GM10248 (cell line): ENCODE measurements at regions of chr1 and their contacts with region 1.

Region 1: DNA sequence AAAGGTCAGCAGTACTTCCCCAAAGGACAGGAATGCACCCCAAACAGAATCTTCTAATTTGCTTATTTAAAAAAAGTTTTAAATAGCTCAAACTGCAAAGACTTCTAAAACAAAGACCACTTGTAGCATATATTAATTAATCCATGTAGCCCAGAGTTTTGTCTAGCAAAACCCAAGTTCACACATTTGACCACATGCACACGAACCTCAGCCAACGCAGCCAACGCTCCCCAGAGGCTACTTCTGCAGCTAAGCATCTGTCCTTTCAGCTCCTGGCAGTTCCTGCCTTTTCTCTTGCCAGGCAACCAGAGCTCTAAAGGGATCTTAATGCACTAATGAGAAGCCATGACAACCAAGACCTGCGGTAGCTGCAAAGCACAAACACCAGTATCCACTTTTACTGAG is 89.6 kb downstream of the RERE start:
- DNase-seq: peak; percentile 31
- CTCF ChIP-seq: no peak

Region 2: GRCh38 chr1:8463144-8463927 is 264.5 kb before region 1 on chr1:
- CTCF ChIA-PET with region 1: no interaction called
- POLR2A ChIA-PET with region 1: no interaction called
- DNase-seq: no peak
- CTCF ChIP-seq: no peak

Region 3: DNA sequence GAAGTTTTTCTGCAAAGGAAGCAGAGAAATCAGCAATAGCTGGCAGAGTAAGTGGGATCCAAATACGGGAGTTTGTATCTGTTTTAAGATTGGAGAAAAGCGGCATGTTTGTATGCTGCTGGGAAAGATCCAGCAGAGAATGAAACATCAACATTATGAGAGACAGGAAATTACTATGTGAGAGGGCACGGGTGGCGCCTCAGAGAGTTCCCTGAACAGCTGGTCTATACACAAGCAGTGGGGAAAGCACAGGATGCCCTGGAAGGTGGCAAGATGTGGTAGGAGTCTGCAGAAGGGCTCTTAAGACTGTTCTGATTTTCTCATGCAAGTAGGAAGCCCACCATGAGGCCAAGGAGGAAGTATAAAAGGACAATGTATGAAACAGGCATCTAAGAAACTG is 40.8 kb before region 1 on chr1:
- CTCF ChIA-PET with region 1: interaction called, 11 read pairs
- POLR2A ChIA-PET with region 1: no interaction called
- DNase-seq: no peak
- CTCF ChIP-seq: no peak

Region 4: DNA sequence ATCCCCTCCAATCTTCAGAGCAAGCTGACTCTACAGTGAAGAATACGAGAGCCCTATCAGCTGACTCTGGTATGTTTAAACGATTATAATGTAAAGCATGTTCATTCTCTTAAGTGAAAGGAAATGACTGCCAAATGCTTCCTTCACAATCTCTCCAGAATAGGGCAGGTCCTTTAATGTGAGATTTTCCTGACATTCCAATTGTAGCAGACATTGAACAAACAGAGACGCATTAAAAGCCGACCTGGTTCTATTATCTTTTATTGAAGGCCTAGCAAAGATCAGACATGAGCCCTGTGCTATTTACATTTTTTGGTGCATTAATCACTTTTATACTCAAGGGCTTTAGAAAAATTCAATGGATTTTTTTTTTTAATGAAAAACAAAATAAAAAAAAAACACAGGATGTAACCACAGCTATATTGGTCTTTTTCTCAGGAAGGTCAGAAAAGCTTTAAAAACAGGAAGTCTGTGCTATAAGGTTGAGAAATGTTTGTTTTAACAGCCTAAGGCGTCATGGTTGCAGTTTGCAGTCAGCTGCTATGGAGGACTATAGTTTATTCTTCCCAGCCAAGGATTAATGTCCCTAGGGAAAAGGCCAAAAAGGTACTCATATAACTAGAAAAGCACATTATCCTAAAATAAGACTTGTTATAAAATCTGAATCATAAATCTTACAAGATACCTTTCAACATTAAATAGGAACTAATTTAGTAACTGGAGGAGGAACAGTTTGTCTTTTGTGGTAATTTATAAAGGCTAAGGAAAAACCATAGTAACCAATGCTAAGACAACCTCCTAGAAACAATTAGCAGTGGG is 15.2 kb before region 1 on chr1:
- CTCF ChIA-PET with region 1: interaction called, 31 read pairs
- POLR2A ChIA-PET with region 1: interaction called, 4 read pairs
- DNase-seq: no peak
- CTCF ChIP-seq: no peak

Region 5: DNA sequence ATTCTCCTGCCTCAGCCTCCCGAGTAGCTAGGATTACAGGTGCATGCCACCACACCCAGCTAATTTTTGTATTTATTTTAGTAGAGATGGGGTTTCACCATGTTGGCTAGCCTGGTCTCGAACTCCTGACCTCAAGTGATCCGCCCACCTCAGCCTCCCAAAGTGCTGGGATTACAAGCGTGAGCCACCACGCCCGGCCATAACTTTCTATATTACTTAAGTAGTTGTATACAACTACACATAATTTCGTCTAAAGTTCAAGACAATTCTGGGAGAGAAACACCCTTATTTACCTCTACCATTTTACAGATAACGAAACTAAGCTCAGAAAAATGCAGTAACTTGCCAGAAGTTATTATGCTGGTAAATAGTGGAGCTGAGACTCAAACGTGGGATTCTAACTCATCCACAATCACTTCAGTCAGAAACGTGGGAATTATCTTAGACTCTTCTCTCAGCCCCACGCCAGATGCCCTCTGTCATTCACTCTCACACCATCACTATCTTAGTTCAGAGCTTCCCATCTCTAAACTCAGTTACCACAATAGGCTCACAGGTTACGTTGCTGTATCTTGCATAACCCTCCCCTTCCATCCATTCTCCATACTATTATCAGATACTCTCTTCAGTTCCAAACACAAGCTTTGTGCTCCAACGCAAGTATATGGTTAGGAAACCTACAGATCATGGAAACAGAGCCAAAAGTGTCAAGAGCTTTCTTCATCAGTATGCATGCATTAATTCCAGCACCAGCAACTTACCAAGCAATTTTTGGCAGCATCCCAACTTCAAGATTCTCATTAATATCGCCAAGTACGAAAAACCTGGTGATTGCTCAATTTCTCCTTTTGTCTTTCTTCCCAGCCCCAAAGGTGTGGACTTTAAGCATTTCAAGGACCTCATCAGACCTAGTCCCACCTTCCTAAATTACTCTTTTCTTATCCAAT is 20.3 kb after region 1 on chr1:
- CTCF ChIA-PET with region 1: interaction called, 15 read pairs
- POLR2A ChIA-PET with region 1: no interaction called
- DNase-seq: no peak
- CTCF ChIP-seq: no peak

Region 6: DNA sequence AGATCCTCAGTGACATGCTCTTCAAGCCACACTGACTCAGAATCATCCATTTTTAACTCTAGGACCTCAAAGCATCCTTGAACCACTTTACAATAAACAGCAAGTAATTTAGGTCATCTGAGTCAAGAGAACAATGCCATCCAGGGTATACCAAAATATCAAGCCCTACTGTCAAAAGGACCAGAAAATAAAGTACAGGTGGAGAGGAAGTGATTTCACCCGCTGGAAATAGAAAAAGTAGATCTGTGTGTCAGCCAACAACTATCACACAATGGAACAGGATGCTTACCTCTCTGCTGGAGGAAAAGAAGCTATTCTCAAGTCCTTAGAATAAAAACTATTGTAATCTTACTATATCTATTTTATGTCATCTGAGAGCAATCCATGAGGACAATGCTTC is 52.6 kb after region 1 on chr1:
- CTCF ChIA-PET with region 1: interaction called, 12 read pairs
- POLR2A ChIA-PET with region 1: no interaction called
- DNase-seq: no peak
- CTCF ChIP-seq: no peak

Region 7: DNA sequence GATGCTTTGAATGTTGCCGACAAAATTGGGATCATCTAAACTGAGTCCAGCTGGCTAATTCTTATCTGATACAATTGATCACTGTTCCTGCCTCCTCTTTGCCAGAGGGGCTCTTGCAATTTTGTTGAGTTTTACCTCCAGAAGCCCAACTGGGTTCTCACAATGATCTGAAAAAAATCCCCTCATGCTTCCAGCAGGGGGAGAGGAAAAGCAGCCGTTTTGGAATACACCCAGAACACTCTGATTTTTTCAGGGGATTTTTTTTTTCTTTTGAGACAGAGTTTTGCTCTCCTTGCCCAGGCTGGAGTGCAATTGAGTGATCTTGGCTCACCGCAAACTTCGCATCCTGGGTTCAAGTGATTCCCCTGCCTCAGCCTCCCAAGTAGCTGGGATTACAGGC is 103.5 kb after region 1 on chr1:
- CTCF ChIA-PET with region 1: no interaction called
- POLR2A ChIA-PET with region 1: no interaction called
- DNase-seq: no peak
- CTCF ChIP-seq: no peak